Common myeloid progenitor, CD34-positive (primary cell): ENCODE measurements at regions of chr10 and their contacts with region 1.

Region 1: GRCh38 chr10:93368210-93368609 is 113.9 kb downstream of the MYOF start:
- DNase-seq: no peak
- H3K4me3 ChIP-seq: no peak overlapping the region
- H3K27ac ChIP-seq: no peak overlapping the region
- H3K4me1 ChIP-seq: peaks cover 0 to 4% (median 0%) of the 10 kb centered on the region in 4 experiments
- H3K27me3 ChIP-seq: no peaks in the 10 kb centered on the region

Region 2: GRCh38 chr10:93224005-93224779 is 144.0 kb before region 1 on chr10:
- CTCF ChIA-PET with region 1: no interaction called
- POLR2A ChIA-PET with region 1: no interaction called
- DNase-seq: peak in 2 of 3 donors; percentile 8 to 31
- H3K4me3 ChIP-seq: no peak overlapping the region
- H3K27ac ChIP-seq: no peak overlapping the region
- H3K4me1 ChIP-seq: peaks cover 0 to 2% (median 0%) of the 10 kb centered on the region in 4 experiments
- H3K27me3 ChIP-seq: no peaks in the 10 kb centered on the region

Region 3: GRCh38 chr10:93352638-93353383 is 15.4 kb before region 1 on chr10:
- CTCF ChIA-PET with region 1: interaction called, 34 read pairs
- POLR2A ChIA-PET with region 1: no interaction called
- DNase-seq: peak; percentile 45 to 68 (median 59)
- H3K4me3 ChIP-seq: no peak overlapping the region
- H3K27ac ChIP-seq: no peak overlapping the region
- H3K4me1 ChIP-seq: no peaks in the 10 kb centered on the region
- H3K27me3 ChIP-seq: peaks cover 0 to 4% (median 0%) of the 10 kb centered on the region in 5 experiments

Region 4: GRCh38 chr10:93392121-93392520 is 23.9 kb after region 1 on chr10:
- CTCF ChIA-PET with region 1: no interaction called
- POLR2A ChIA-PET with region 1: no interaction called
- DNase-seq: no peak
- H3K4me3 ChIP-seq: no peak overlapping the region
- H3K27ac ChIP-seq: no peak overlapping the region
- H3K4me1 ChIP-seq: peaks cover 0 to 23% (median 9%) of the 10 kb centered on the region in 4 experiments
- H3K27me3 ChIP-seq: no peaks in the 10 kb centered on the region